ENCODE measurements at regions of chr3 and their contacts with region 1.

Region 1: DNA sequence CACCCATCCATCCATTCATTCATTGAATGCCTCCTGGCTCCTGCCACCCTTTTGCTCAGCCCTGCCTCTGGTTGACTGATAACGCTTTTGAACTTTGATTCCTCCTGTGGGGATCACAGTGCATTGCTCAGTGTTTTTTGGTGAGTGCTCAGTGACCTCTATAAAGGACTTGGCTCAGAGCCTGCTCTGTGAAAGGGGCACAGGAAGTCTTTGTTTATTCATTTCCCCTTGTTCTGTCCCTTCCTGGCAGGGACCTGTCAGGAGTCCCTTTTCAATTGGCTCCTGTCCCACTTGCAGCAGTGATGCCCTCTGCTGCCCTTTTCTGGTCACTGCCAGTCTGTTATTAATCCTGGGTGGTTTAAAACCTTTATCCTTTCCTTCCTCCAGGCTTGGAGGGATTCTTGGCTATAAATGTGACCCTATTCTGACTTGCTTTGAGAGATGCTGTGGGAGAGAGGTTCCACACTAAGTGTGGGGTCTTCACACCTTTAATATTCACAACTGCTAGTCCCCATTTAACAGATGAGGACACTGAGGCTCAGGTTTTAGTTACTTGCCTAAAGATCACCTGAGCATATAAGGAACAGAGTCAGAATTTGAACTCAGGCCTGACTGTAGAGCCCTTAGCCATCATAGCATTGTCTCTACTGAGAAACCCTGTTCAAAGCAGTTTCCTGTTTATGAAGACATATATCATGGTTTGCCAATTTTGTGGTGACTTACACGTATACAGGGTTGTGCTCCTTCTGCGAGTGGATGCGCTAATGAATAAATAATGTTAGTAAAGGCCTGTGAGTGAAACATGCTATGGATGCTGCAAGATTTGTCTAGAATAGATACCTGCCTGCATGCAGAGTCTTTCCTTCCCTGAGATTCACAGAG is 23.2 kb upstream of the TATDN2 start:
- DNase-seq: peak; percentile 78
- H3K4me3 Mint-ChIP-seq: peak overlapping the region; percentile 15
- H3K27ac Mint-ChIP-seq: peak overlapping the region; percentile 84
- H3K4me1 Mint-ChIP-seq: peaks cover 47% of the 10 kb centered on the region
- H3K27me3 Mint-ChIP-seq: no peaks in the 10 kb centered on the region
- CTCF ChIP-seq: peak; percentile 76

Region 2: GRCh38 chr3:10169000-10169496 is 56.0 kb before region 1 on chr3:
- CTCF ChIA-PET with region 1: no interaction called
- intact Hi-C with region 1: loop called (anchors 2 kb)
- DNase-seq: peak; percentile 62
- H3K4me3 Mint-ChIP-seq: peak overlapping the region; percentile 54
- H3K27ac Mint-ChIP-seq: peak overlapping the region; percentile 75
- H3K4me1 Mint-ChIP-seq: peaks cover 40% of the 10 kb centered on the region
- H3K27me3 Mint-ChIP-seq: no peaks in the 10 kb centered on the region
- CTCF ChIP-seq: peak; percentile 59

Region 3: DNA sequence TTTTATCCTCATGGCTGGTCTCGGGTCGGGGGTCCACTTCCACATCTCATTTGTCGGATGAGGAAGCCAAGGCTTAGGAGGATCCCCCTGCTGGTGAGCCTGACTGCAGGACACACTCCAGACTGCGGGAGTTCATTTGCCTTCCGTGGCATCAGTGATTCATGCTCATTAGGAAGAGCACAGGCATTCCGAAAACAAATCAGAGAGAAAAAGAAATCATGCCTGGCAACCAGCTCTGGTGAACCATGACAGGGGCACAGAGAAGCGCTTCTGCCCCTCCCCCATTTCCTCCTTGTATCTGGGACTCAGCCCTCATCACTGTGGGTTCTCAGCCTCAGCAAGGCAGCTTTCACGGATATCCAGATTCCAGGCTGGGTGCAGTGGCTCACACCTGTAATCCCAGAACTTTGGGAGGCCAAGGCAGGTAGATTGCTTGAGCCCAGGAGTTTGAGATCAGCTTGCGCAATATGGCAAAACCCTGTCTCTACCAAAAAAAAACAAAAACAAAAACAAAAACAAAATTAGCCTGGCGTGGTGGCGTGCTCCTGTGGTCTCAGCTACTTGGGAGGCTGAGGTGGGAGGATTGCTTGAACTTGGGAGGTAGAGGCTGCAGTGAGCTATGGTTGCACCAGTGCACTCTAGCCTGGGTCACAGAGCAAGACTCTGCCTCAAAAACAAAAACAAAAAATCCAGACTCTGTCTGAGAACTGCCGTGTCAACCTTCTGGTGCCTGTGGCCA is 31.9 kb before region 1 on chr3:
- CTCF ChIA-PET with region 1: interaction called, 6 read pairs
- intact Hi-C with region 1: loop called (anchors 5 kb)
- DNase-seq: no peak
- H3K4me3 Mint-ChIP-seq: no peak overlapping the region
- H3K27ac Mint-ChIP-seq: peak overlapping the region; percentile 93
- H3K4me1 Mint-ChIP-seq: peaks cover 60% of the 10 kb centered on the region
- H3K27me3 Mint-ChIP-seq: no peaks in the 10 kb centered on the region
- CTCF ChIP-seq: no peak

Region 4: GRCh38 chr3:10205451-10206165 is 19.4 kb before region 1 on chr3:
- CTCF ChIA-PET with region 1: interaction called, 3 read pairs
- intact Hi-C with region 1: loop called (anchors 2 kb)
- DNase-seq: peak; percentile 76
- H3K4me3 Mint-ChIP-seq: peak overlapping the region; percentile 37
- H3K27ac Mint-ChIP-seq: peak overlapping the region; percentile 89
- H3K4me1 Mint-ChIP-seq: peaks cover 42% of the 10 kb centered on the region
- H3K27me3 Mint-ChIP-seq: no peaks in the 10 kb centered on the region
- CTCF ChIP-seq: no peak

Region 5: GRCh38 chr3:10299679-10300078 is 74.7 kb after region 1 on chr3:
- CTCF ChIA-PET with region 1: no interaction called
- intact Hi-C with region 1: no loop called
- DNase-seq: no peak
- H3K4me3 Mint-ChIP-seq: no peak overlapping the region
- H3K27ac Mint-ChIP-seq: no peak overlapping the region
- H3K4me1 Mint-ChIP-seq: no peaks in the 10 kb centered on the region
- H3K27me3 Mint-ChIP-seq: no peaks in the 10 kb centered on the region
- CTCF ChIP-seq: no peak

Measured in Calu3 (cell line).